Motor neuron (in vitro differentiated cells): ENCODE measurements at regions of chr17 and their contacts with region 1.

Region 1: DNA sequence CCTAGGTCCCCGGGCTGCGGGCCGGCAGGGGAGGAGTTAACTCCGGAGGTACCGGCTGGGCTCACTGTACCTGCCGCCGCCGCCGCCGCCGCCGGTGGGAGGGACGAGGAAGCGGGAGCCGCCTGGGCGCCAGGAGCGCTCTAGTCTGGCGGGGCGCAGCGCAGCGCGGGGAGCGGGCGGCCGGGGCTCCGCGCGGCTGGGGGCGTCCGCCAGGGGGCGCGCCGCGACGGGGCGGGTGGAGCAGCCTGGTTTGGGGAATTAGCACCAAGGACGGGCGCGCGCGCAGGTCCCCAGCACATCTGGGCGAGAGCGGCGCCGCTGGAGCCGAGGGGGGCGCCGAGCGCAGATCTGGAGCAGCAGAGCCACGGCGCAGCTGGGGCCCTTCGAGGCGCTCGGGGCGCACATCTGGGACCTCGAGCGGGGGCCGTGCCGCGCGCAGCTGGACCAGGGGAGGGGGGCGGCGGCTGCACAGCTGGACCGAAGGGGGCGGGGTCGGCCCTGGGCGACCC is at the start of gene NXPH3:
- ATAC-seq: peak; percentile 28 to 71 (median 41)
- H3K4me3 ChIP-seq: peak within 1 kb of the TSS; percentile 34 to 48 (median 39)
- H3K27ac ChIP-seq: no peak within 1 kb of the TSS
- H3K4me1 ChIP-seq: peaks cover 0 to 4% of the 10 kb centered on the region in 2 donors
- total RNA-seq, gene NXPH3: 0.16 to 1.3 (median 0.39) TPM

Region 2: DNA sequence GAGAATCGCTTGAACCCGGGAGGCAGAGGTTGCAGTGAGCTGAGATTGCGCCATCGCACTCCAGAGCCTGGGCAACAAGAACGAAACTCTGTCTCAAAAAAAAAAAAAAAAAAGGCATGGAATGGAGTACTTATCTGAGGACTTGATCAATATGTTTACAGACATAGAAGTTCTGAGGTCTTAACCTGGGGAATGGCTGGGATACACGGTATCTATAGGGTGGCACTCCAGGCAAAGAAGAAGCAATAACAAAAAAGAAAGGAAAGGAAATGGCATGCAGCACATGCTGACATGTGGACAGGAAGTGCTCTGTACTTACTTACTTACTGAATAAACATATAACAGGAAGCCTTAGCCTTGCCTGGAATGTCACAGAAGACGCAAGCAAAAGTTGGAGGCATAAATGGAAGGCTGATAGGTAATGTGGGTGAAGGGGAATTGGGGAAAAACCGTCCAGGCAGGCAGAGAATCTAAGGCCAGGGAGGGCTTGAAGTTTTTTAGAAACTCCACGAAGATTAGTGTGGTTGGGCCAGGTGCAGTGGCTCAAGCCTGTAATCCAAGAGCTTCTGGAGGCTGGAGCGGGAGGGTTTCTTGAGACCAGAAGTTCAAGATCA is 112.4 kb after region 1 on chr17:
- in situ Hi-C with region 1: loop called in 6 of 9 experiments (anchors 5 to 10 kb)
- ATAC-seq: no peak
- H3K4me3 ChIP-seq: no peak overlapping the region
- H3K27ac ChIP-seq: no peak overlapping the region
- H3K4me1 ChIP-seq: no peaks in the 10 kb centered on the region

Region 3: DNA sequence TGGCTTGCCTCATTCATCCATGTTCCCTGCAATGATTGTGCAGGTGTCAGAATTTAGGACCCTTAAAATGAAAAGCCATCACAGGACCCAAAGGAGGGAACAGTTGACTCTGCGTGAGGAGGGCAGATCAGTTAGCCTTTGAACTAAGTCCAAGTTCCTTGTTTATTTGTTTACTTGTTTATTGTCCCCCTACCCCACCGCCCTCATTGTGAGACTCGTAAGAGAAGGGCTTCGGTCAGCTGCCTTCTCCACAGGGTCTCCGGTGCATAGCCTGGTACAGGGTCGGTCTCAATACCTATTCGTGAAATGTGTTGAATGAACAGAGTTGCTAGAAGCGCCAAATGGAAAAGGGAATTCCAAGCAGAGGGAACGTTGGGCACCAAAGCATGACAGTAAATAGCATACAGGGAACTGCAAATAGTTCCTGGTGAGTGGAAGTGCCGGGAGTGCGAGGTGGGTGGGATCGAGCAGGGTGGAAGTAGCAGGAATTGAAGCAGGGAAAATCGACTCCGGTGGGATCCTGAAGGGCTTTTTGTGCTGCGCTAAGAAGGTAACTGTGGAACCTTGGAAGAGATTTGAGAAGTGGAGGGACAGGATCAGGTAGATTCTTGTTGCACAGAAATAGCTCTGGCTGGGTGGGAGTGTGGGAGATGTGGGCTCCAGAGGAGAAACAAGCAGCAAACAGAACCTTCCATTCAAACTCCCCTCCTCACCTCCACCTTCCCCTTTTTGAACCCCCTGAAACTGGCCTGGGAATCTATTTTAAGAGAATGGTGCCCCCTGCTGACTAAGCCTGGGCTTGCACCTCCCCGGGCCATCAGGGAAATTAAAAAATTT is 119.4 kb after region 1 on chr17:
- in situ Hi-C with region 1: loop called in 5 of 9 experiments (anchors 5 to 10 kb)
- ATAC-seq: peak in 6 of 8 experiments; percentile 25 to 52 (median 34)
- H3K4me3 ChIP-seq: no peak overlapping the region
- H3K27ac ChIP-seq: no peak overlapping the region
- H3K4me1 ChIP-seq: no peaks in the 10 kb centered on the region